Head of caudate nucleus (tissue), 42 donors: ENCODE measurements at regions of chr13 and their contacts with region 1.

Region 1: GRCh38 chr13:33125821-33126570 is 109.8 kb downstream of the KL start:
- DNase-seq: no peak

Region 2: GRCh38 chr13:33174931-33175330 is 48.9 kb after region 1 on chr13:
- intact Hi-C with region 1: loop called (anchors 10 kb)
- DNase-seq: no peak